ENCODE measurements at regions of chr5 and their contacts with region 1.

Region 1: DNA sequence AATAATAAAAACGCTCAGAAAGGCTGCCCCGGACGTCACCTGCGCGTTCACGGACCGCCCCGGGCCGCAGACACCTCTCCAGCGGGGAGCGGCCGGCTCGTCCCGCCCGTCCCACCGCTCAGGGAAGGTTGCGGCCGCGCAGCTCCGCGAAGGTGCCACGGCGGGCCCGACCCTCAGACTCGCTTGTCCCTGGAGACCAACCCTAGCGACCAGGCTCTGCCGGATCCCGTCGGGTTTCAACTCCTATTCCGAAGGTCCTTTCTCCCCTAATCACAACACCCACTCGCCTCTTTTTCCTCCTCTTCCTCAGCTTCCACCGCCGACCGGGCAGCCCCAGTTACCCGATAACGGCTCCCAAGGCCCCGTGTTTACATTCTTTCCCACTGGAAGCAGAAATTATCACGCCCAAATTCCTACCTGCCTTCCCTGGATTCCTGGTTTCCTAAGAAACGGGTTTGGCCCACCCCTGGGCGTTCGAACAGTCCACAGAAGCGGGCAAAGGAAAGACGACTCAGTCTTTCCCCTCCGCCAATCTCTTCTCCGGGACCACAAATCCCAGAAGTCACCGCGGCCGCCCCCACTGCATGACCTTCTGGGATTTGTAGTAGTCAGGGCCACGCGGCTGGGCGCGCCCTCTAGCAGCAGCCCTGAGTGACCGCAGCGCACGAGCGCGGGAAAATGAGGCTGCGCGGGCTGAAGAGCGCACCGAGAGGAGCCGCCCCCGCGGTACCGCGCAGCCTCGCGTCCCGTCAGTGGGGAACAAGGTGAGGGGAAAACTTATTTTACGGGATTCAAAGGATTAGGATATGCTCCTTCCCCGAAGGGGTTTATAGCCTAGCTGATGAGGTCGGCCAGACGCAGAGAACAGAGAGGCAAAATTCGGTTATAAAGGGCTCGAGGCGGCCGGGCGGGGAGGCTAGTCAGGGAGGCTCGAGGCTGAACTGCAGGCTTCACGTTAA is at the start of gene TTC33:
- H3K4me3 Mint-ChIP-seq: no peak within 1 kb of the TSS
- H3K27ac Mint-ChIP-seq: no peak within 1 kb of the TSS
- H3K4me1 Mint-ChIP-seq: no peaks in the 10 kb centered on the region
- H3K27me3 Mint-ChIP-seq: no peaks in the 10 kb centered on the region

Region 2: DNA sequence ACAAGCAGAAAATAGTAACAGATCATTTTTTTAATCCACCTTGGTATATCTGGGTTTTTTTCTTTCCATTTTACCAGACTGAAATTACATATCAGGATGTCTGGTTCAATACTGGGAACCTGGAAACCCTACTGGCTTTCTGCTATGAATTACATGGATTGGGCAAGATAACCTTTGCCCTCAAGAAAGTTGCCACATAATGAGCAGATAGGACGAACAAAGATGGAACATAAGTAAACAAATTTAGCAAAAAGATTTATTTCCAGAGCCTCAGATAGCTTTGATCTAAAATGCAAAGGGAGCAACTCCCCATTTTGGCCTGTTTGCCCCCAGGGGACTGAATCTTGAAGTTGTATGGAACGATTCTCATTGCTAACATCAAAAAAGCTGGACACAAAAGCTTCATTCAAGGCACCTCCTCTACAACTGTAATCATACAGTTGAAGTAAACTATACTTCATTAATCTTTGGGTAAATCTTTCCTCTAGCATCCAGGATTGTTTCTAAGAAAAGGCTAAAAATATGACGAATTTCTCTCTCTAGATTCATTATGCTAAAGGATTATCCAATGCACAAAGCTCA is 207.6 kb before region 1 on chr5:
- intact Hi-C with region 1: no loop called
- H3K4me3 Mint-ChIP-seq: no peak overlapping the region
- H3K27ac Mint-ChIP-seq: no peak overlapping the region
- H3K4me1 Mint-ChIP-seq: peaks cover 12% of the 10 kb centered on the region
- H3K27me3 Mint-ChIP-seq: no peaks in the 10 kb centered on the region

Region 3: DNA sequence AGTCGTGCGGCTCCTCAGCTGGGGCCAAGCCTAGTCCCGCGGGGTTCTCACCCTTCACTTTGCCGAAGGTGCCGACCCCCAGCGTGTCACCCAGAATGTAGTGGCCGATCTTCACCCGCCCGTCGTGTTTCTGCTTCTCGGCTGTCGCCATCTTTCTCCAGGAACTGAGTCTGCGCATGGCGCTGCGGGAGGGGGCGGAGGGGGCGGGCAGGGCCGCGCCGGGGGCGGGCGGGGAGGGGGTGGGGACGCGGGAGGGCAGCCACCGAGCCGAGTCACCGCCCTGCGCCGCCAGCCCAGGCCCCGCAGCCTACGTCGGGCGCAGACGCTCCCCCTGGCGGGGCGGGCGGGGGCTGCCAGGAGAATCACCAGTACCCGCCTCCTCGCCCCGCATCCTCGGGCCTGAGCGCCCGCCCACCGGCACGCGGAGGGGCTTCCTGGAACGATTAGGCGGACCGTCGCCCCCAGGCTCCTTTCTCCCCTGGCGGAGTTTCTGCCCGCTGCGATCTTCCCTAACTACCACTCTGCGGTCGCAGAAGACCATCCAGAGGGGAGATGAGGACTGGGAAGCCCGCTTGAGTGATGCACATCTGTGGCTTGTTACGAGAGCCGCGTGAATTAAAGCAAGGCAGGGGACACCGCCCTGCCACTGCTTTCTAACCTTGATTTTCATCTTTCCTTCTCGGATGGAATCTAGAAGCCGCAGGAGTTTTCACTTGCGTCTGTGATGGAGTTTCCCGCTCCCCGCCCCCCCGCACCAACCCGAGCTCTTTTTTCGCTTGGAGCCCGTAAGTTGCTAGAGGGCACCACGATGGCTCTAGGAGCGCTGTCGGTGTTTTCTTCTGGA is 42.5 kb after region 1 on chr5 and contains the start of gene PRKAA1:
- intact Hi-C with region 1: loop called (anchors 1 kb)
- H3K4me3 Mint-ChIP-seq: peak within 1 kb of the TSS; percentile 83
- H3K27ac Mint-ChIP-seq: peak within 1 kb of the TSS; percentile 82
- H3K4me1 Mint-ChIP-seq: peaks cover 21% of the 10 kb centered on the region
- H3K27me3 Mint-ChIP-seq: peaks cover 3% of the 10 kb centered on the region

Region 4: GRCh38 chr5:40834849-40835787 is 79.4 kb after region 1 on chr5 and contains the start of gene RPL37:
- intact Hi-C with region 1: loop called (anchors 2 kb)
- H3K4me3 Mint-ChIP-seq: peak within 1 kb of the TSS; percentile 97
- H3K27ac Mint-ChIP-seq: peak within 1 kb of the TSS; percentile 98
- H3K4me1 Mint-ChIP-seq: peaks cover 39% of the 10 kb centered on the region
- H3K27me3 Mint-ChIP-seq: peaks cover 2% of the 10 kb centered on the region

Region 5: DNA sequence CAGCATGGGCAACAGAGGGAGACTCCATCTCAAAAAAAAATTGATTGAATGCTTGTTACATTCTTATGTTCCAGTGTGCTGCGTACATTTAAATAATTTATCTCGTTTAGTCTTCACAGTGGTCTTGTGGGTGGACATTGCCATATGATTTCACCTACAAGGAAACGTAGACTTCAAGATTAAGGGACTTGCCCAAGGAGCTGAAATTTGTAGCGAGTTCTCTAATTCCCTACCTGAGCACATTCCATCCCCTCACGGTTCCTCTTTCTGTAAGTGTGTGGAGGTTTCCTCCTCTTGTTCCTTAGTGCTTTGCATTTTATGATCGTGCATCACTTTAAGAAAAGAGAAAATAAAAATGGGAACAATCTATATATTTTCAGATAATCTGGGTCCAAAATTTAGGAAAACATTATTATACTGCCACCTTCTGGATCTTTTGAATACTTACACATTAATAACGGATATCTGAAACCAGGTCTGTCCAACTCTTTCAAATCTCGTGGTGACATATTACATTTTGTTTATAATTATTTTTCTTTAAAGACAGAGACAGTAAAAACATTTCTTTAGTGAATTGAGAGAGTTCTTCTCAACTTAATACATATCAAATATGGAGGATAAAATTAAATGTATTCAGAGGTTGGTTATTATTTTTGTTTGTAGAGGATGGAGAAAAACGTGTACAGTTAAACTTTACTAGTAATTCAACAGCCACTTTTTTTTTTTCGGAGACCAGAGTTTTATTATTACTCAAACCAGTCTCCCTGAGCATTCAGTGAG is 123.7 kb after region 1 on chr5:
- intact Hi-C with region 1: loop called (anchors 5 kb)
- H3K4me3 Mint-ChIP-seq: no peak overlapping the region
- H3K27ac Mint-ChIP-seq: no peak overlapping the region
- H3K4me1 Mint-ChIP-seq: no peaks in the 10 kb centered on the region
- H3K27me3 Mint-ChIP-seq: no peaks in the 10 kb centered on the region